PC-3 (cell line): ENCODE measurements at regions of chr5 and their contacts with region 1.

Region 1: DNA sequence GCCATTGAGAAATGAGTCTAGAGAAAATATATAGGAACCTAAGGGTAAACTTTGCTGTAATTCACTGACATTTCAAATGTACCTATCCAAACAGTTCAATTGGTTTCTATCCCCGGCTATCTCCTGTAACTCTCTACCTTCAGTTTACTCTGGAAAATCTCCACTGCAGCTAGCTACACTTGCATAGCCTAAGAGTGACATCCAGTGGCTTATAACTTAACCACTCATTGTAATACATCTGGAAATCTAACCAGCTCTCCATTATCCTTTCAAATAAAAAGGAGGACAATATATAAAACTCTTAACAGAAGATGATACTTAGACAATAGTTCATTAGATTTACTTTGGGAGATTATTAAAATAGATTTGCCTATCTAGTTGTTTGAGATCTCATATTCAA is 35.3 kb upstream of the SPDL1 start:
- DNase-seq: peak; percentile 66
- ATAC-seq: peak; percentile 92
- H3K4me3 ChIP-seq: no peak overlapping the region
- H3K27ac ChIP-seq: no peak overlapping the region
- H3K4me1 ChIP-seq: no peaks in the 10 kb centered on the region
- H3K27me3 ChIP-seq: peaks cover 22% of the 10 kb centered on the region
- CTCF ChIP-seq: peak; percentile 67

Region 2: DNA sequence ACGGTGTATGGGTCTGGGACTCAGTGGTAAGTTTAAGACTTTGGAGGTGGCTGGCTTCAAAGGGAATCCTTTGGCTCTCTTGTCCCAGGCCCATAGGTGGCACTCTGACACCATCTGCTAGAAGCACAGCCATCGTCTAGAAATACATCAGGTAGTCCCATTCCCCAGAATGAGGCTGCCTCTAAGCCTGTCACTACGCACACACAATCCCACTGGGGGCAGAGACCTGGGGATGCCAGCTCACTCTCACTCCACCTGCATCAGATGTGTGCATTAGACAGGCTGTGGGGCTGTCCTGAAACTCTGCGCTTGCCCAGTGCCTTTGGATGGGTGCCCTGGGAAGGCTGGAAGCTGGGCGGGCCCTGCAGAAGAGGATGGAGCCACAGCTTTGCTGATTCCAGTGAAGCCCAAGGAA is 841.7 kb before region 1 on chr5:
- CTCF ChIA-PET with region 1: no interaction called
- POLR2A ChIA-PET with region 1: no interaction called
- intact Hi-C with region 1: loop called (anchors 1 kb)
- DNase-seq: peak; percentile 52
- ATAC-seq: peak; percentile 84
- H3K4me3 ChIP-seq: no peak overlapping the region
- H3K27ac ChIP-seq: no peak overlapping the region
- H3K4me1 ChIP-seq: no peaks in the 10 kb centered on the region
- H3K27me3 ChIP-seq: no peaks in the 10 kb centered on the region
- CTCF ChIP-seq: peak; percentile 63

Region 3: DNA sequence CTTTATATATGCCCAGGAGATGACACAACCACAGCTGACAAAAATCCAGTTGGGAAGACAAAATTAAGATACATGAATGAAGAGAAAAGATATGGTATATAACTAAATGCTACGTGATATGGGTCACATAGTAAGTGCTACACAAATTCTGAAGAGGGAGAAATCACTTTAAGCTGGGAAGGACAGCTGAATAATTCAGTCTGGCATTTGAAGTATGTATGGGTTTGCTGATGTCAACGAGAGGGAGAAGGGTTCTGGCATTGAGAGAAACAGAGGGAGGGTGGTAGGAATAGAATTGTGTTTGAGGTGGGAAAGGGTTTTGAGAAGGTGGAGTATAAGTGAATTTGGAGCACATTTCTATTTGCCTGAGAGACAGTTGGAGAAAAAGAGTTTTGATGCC is 240.7 kb before region 1 on chr5:
- CTCF ChIA-PET with region 1: no interaction called
- POLR2A ChIA-PET with region 1: no interaction called
- intact Hi-C with region 1: no loop called
- DNase-seq: no peak
- ATAC-seq: no peak
- H3K4me3 ChIP-seq: no peak overlapping the region
- H3K27ac ChIP-seq: no peak overlapping the region
- H3K4me1 ChIP-seq: no peaks in the 10 kb centered on the region
- H3K27me3 ChIP-seq: peaks cover 26% of the 10 kb centered on the region
- CTCF ChIP-seq: no peak

Region 4: GRCh38 chr5:170183816-170184687 is 635.7 kb after region 1 on chr5:
- CTCF ChIA-PET with region 1: no interaction called
- POLR2A ChIA-PET with region 1: no interaction called
- intact Hi-C with region 1: no loop called
- DNase-seq: peak; percentile 74
- ATAC-seq: peak; percentile 96
- H3K4me3 ChIP-seq: no peak overlapping the region
- H3K27ac ChIP-seq: no peak overlapping the region
- H3K4me1 ChIP-seq: no peaks in the 10 kb centered on the region
- H3K27me3 ChIP-seq: no peaks in the 10 kb centered on the region
- CTCF ChIP-seq: peak; percentile 82